Tibial artery (tissue), 4 donors: ENCODE measurements at regions of chr2 and their contacts with region 1.

Region 1: GRCh38 chr2:119598596-119599263 is 54.5 kb downstream of the CFAP221 start:
- DNase-seq: no peak
- H3K4me3 ChIP-seq: no peak overlapping the region
- H3K27ac ChIP-seq: no peak overlapping the region
- H3K4me1 ChIP-seq: peaks cover 0 to 8% (median 3%) of the 10 kb centered on the region in 4 donors
- H3K27me3 ChIP-seq: no peaks in the 10 kb centered on the region
- CTCF ChIP-seq: no peak

Region 2: DNA sequence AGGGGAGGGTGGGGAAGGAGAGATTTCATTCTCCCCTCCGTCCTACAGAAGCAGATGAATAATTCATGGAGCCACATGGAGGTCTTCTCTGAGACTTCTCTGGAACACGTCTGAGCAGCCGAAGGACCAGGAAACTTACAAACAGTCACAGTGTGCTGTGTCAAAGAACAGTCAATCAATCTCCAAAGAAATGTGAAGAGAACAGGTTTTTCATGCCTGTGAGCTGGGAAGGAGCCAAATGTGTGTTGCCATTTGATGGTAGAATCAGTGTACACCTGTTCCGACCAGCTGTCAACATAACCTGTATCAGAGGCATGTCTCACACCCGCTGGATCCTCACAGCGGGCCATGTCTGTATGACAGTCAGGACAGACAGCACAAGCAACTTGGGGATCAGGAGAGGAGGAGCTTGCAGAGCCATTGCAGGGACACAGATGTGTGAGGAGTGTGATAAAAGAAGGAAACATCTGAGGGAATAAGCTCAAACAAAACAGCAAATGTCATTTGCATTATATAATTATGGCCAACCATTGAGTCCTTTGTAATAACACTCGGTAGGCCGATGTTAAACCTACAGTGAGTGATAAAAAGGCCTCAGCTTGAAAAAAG is 1049.7 kb before region 1 on chr2:
- intact Hi-C with region 1: loop called (anchors 10 kb)
- DNase-seq: no peak
- H3K4me3 ChIP-seq: no peak overlapping the region
- H3K27ac ChIP-seq: no peak overlapping the region
- H3K4me1 ChIP-seq: no peaks in the 10 kb centered on the region
- H3K27me3 ChIP-seq: no peaks in the 10 kb centered on the region
- CTCF ChIP-seq: no peak

Region 3: GRCh38 chr2:119476301-119477021 is 122.3 kb before region 1 on chr2:
- intact Hi-C with region 1: no loop called
- DNase-seq: peak in 1 of 2 donors; percentile 67
- H3K4me3 ChIP-seq: no peak overlapping the region
- H3K27ac ChIP-seq: no peak overlapping the region
- H3K4me1 ChIP-seq: peaks cover 0 to 7% (median 3%) of the 10 kb centered on the region in 4 donors
- H3K27me3 ChIP-seq: peaks cover 0 to 15% of the 10 kb centered on the region in 2 donors
- CTCF ChIP-seq: peak; percentile 83 to 95